ENCODE measurements at regions of chr6 and their contacts with region 1.

Region 1: GRCh38 chr6:114157848-114158247 is 185.0 kb downstream of the HS3ST5 start:
- DNase-seq: no peak
- ATAC-seq: no peak
- H3K4me3 ChIP-seq: no peak overlapping the region
- H3K27ac ChIP-seq: no peak overlapping the region
- H3K4me1 ChIP-seq: peaks cover 47% of the 10 kb centered on the region
- H3K27me3 ChIP-seq: no peaks in the 10 kb centered on the region
- CTCF ChIP-seq: no peak
- EP300 ChIP-seq: no peak
- POLR2A ChIP-seq: no peak
- RAD21 ChIP-seq: no peak

Region 2: DNA sequence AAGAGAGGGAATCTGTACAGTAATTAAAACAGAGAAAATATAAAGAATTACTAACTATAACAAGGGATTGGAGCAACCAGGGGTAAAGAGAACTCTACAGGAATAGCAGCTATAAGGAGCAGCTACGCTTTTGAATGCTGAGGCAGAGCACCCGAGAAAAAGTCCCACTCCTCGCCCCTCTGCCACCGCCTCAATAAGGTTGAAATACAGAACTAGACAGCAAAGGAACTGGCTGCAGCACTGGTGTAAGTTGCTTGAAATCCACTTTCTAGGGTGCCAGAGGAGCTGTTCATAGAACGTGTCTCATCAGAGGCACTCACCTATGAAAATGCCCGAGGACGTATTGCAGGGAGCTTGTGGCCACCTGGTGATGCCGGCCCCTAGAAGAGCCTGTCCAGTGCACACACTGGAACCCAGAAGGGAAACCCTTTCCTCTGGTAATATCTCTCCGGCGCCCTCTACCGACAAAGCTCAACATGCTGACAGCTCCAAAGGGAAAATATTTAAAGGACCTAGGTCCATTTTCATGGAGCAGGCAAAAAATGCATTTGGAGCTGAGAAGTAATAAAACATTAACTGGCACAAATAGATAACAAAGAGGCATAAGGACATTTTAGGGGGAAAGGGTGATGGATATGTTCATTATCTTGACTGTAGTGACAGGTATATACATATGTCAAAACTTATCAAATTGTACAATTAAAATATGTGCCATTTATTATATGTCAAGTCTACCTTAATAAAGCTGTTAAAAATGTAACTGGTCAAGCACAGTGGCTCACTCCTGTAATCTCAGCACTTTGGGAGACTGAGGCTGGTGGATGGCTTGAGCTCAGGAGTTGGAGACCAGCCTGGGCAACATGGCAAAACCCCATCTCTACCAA is 49.5 kb before region 1 on chr6:
- CTCF ChIA-PET with region 1: no interaction called
- POLR2A ChIA-PET with region 1: no interaction called
- in situ Hi-C with region 1: no loop called
- intact Hi-C with region 1: loop called (anchors 5 kb)
- DNase-seq: peak; percentile 63
- ATAC-seq: peak; percentile 92
- H3K4me3 ChIP-seq: no peak overlapping the region
- H3K27ac ChIP-seq: no peak overlapping the region
- H3K4me1 ChIP-seq: peaks cover 10% of the 10 kb centered on the region
- H3K27me3 ChIP-seq: no peaks in the 10 kb centered on the region
- CTCF ChIP-seq: peak; percentile 71
- EP300 ChIP-seq: no peak
- POLR2A ChIP-seq: no peak
- RAD21 ChIP-seq: peak; percentile 18; the same call in 1 of the 2 replicates